ENCODE measurements at regions of chr20 and their contacts with region 1.

Region 1: DNA sequence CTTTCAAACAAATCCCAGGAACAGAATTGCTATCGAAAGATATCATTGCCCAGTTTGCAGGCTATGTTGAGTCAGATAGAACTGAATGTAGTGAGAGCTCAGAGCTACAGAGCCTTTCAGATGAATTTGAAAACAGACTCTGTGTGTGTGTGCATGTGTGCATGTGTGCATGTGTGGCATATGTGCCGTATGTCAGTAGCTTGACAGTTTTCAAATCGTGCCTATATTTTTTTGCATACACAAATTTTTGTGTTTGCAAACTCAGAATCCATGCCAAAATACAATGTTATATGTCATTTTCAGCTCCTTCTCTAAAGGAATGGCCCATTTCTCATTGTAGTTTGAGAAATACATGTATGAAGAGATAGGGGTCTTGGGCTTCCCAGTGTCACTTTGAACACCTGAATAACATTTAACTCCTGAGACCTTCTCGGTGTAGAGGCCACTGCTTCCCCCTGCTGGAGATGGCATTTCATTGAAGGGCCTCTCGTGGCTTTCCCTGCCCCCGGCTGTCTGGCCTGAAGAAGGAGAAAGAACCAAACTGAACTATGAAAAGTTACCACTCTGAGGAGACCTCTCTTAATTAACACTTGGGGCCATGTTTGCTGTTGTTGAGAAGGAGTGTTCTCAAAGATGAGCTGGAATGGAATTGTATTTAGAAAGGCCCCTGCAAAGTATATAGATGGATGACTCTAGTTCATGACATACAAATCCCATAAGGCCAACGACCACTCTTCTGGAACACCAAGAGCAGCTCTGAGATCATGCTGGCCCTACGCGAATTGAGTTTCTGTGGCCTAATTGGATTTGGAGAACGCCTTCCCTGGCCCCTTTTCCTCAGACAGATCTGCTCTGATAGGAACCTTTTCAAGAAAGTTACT is 58.7 kb downstream of the VAPB start:
- DNase-seq: no peak
- ATAC-seq: peak; percentile 62

Region 2: GRCh38 chr20:58388882-58389323 is 58.8 kb before region 1 on chr20 and contains the start of gene VAPB:
- intact Hi-C with region 1: loop called (anchors 5 kb)
- DNase-seq: peak; percentile 98
- ATAC-seq: peak; percentile 100
- total RNA-seq, gene VAPB: 72.4 TPM

Measured in Right ventricle myocardium inferior (tissue), 1 donor.